Activated CD8-positive, alpha-beta T cell treated with anti-CD3 and anti-CD28 coated beads, Interleukin-2, amount 10 ng/mL, durations not matched to agents 7 days and 5 days (primary cell): ENCODE measurements at regions of chr4 and their contacts with region 1.

Region 1: GRCh38 chr4:1721004-1721665 is at the starts of genes TACC3 and TMEM129:
- DNase-seq: peak; percentile 97
- ATAC-seq: peak; percentile 85
- H3K4me3 Mint-ChIP-seq: peak within 1 kb of the TSS; percentile 98
- H3K27ac Mint-ChIP-seq: peak within 1 kb of the TSS; percentile 98
- H3K4me1 Mint-ChIP-seq: peaks cover 53% of the 10 kb centered on the region
- H3K27me3 Mint-ChIP-seq: no peaks in the 10 kb centered on the region
- total RNA-seq, gene TACC3: 284 to 311 TPM
- total RNA-seq, gene TMEM129: 21.9 to 22.4 TPM

Region 2: DNA sequence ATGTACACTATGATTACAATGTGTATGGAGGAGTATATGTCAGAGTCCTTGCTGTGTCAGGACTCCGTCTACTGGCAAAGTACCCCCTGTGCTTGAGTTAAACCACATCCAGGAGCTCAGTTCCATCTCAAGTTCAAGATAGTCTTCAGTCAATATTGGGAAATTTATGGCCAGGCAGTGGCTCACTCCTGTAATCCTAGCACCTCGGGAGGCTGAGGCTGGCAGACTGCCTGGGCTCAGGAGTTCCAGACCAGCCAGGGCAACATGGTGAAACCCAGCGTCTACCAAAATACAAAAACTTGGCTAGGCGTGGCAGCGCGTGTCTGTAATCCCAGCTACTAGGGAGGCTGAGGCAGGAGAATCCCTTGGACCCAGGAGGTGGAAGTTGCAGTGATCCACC is 14.8 kb before region 1 on chr4:
- CTCF ChIA-PET with region 1: interaction called, 10 read pairs
- POLR2A ChIA-PET with region 1: interaction called, 112 read pairs
- DNase-seq: no peak
- ATAC-seq: no peak
- H3K4me3 Mint-ChIP-seq: no peak overlapping the region
- H3K27ac Mint-ChIP-seq: no peak overlapping the region
- H3K4me1 Mint-ChIP-seq: peaks cover 73% of the 10 kb centered on the region
- H3K27me3 Mint-ChIP-seq: no peaks in the 10 kb centered on the region